Activated CD4-positive, alpha-beta T cell treated with anti-CD3 and anti-CD28 coated beads for 36 hours (primary cell): ENCODE measurements at regions of chr17 and their contacts with region 1.

Region 1: GRCh38 chr17:46044286-46044928 is 45.4 kb downstream of the STH start:
- DNase-seq: peak; percentile 65
- ATAC-seq: no peak
- H3K4me3 Mint-ChIP-seq: no peak overlapping the region
- H3K27ac Mint-ChIP-seq: peak overlapping the region; percentile 11
- H3K4me1 Mint-ChIP-seq: peaks cover 17% of the 10 kb centered on the region
- H3K27me3 Mint-ChIP-seq: no peaks in the 10 kb centered on the region

Region 2: DNA sequence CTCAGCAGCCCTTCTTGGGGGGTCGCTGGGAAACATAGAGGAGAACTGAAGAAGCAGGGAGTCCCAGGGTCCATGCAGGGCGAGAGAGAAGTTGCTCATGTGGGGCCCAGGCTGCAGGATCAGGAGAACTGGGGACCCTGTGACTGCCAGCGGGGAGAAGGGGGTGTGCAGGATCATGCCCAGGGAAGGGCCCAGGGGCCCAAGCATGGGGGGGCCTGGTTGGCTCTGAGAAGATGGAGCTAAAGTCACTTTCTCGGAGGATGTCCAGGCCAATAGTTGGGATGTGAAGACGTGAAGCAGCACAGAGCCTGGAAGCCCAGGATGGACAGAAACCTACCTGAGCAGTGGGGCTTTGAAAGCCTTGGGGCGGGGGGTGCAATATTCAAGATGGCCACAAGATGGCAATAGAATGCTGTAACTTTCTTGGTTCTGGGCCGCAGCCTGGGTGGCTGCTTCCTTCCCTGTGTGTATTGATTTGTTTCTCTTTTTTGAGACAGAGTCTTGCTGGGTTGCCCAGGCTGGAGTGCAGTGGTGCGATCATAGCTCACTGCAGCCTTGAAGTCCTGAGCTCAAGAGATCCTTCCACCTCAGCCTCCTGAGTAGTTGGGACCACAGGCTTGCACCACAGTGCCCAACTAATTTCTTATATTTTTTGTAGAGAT is 42.0 kb before region 1 on chr17:
- CTCF ChIA-PET with region 1: interaction called, 4 read pairs
- POLR2A ChIA-PET with region 1: no interaction called
- intact Hi-C with region 1: loop called (anchors 1 to 2 kb)
- DNase-seq: peak; percentile 83
- ATAC-seq: peak; percentile 93
- H3K4me3 Mint-ChIP-seq: no peak overlapping the region
- H3K27ac Mint-ChIP-seq: no peak overlapping the region
- H3K4me1 Mint-ChIP-seq: no peaks in the 10 kb centered on the region
- H3K27me3 Mint-ChIP-seq: no peaks in the 10 kb centered on the region

Region 3: DNA sequence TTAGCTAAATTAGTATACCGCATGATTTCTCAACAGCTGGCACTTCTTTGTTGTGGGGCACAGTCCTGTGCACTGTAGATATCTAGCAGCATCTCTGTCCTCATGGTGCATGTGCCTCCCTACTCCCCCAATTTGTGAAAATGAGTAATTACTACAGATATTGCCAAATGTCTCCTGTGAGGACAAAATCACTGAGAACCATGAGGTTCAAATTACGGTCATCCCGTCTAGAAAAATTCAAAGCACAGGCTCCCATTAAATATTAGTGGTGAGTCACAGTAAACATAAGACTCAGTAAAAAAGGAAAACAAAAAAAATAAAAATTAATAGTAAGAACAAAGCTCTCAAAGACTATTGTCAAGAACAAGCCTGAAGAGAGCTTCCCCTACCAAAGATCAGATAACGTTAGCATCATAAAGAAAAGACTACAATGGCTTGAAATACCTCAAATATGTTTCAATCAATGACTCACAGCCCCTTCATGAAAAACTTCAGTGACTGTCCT is 12.4 kb after region 1 on chr17:
- CTCF ChIA-PET with region 1: interaction called, 25 read pairs
- POLR2A ChIA-PET with region 1: no interaction called
- intact Hi-C with region 1: no loop called
- DNase-seq: no peak
- ATAC-seq: no peak
- H3K4me3 Mint-ChIP-seq: no peak overlapping the region
- H3K27ac Mint-ChIP-seq: no peak overlapping the region
- H3K4me1 Mint-ChIP-seq: peaks cover 43% of the 10 kb centered on the region
- H3K27me3 Mint-ChIP-seq: no peaks in the 10 kb centered on the region

Region 4: DNA sequence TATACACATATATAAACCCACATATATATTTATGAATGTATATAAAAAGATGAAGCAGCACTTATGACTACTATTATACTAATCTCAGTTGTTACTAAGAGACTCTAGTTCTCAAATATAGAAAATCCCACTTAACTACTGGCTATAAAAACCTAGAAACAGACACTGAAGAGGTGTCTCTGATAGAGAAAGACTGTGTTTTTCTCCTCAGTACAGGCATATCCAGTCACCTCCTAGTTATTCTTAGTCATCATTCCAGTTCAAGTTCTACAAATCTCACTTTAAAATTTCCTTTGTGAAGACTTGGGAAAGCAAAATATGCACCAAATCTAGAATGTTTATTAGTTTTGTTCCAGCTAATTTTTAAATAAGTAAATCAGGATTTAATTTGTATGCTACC is 48.6 kb after region 1 on chr17:
- CTCF ChIA-PET with region 1: interaction called, 10 read pairs
- POLR2A ChIA-PET with region 1: no interaction called
- intact Hi-C with region 1: no loop called
- DNase-seq: no peak
- ATAC-seq: no peak
- H3K4me3 Mint-ChIP-seq: no peak overlapping the region
- H3K27ac Mint-ChIP-seq: no peak overlapping the region
- H3K4me1 Mint-ChIP-seq: peaks cover 59% of the 10 kb centered on the region
- H3K27me3 Mint-ChIP-seq: no peaks in the 10 kb centered on the region

Region 5: DNA sequence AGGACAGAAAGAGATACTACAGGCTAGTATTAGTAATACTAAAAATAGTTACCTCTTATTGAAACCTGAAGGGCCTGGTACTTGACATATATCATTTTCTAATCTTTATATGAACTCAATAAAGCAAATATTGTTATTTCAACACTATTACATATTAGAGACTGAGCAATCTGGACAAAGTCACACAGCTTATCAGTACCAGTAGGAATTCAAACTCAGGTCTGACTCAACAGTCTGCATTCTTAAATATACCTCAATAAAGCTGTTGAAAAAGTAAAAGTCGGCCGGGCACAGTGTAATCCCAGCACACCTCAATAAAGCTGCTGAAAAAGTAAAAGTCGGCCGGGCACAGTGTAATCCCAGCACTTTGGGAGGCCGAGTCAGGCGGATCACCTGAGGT is 81.4 kb after region 1 on chr17:
- CTCF ChIA-PET with region 1: no interaction called
- POLR2A ChIA-PET with region 1: no interaction called
- intact Hi-C with region 1: no loop called
- DNase-seq: no peak
- ATAC-seq: no peak
- H3K4me3 Mint-ChIP-seq: no peak overlapping the region
- H3K27ac Mint-ChIP-seq: no peak overlapping the region
- H3K4me1 Mint-ChIP-seq: peaks cover 90% of the 10 kb centered on the region
- H3K27me3 Mint-ChIP-seq: no peaks in the 10 kb centered on the region

Region 6: GRCh38 chr17:46199379-46199778 is 155.0 kb after region 1 on chr17:
- CTCF ChIA-PET with region 1: interaction called, 10 read pairs
- POLR2A ChIA-PET with region 1: no interaction called
- intact Hi-C with region 1: no loop called
- DNase-seq: no peak
- ATAC-seq: no peak
- H3K4me3 Mint-ChIP-seq: no peak overlapping the region
- H3K27ac Mint-ChIP-seq: no peak overlapping the region
- H3K4me1 Mint-ChIP-seq: peaks cover 55% of the 10 kb centered on the region
- H3K27me3 Mint-ChIP-seq: no peaks in the 10 kb centered on the region